ENCODE measurements at regions of chr2 and their contacts with region 1.

Region 1: DNA sequence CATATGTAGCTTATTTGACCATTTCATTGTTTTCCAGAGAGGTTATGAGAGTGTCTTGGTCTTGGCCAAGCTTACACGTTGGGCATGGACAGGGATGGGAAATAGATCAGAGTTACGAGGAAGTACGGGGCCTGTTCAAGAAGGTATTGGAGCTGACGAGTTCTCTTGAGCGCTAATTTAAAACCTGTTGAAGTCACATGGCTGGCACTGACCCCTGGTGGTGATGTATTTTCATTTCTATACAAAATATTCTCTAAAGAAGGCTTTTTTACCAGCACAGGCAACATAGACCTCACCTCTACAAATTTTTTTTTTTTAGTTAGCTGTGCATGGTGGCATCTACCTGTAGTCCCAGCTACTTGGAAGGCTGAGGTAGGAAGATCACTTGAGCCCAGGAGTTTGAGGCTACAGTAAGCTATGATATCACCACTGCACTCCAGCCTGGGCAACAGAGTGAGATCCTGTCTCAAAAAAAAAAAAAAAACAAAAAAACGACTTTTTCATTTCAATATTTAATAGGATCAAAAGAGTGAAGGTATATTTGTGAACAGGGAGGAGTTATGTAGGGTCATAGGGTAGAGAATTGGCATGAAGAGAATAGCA is 19.6 kb downstream of the UGP2 start:
- DNase-seq: peak in 4 of 5 donors; percentile 31 to 66 (median 40)
- H3K4me3 ChIP-seq: no peak overlapping the region
- H3K27ac ChIP-seq: no peak overlapping the region
- H3K4me1 ChIP-seq: no peaks in the 10 kb centered on the region
- H3K27me3 ChIP-seq: no peaks in the 10 kb centered on the region
- CTCF ChIP-seq: peak; percentile 15 to 45 (median 23)
- EP300 ChIP-seq: no peak
- POLR2A ChIP-seq: no peak

Region 2: DNA sequence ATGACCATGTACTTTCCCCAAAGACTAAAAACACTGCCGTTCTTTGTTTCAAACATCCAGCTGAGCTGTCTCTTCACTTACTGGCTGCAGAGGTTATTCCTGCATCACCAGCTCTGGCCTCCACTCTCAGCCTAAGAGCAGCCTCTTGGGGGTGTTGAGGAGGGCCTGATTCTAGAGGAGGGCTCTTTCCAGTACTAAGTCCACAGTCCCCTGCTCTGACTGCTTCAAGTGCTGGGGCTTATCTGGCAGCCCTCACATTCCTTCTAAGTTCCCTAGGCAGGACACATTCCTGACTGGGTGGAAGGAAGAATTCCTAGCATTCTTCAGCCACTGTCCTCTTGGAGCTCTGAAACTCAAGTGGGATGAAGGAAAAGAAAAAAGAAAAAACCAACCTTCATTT is 1188.7 kb before region 1 on chr2:
- intact Hi-C with region 1: no loop called
- DNase-seq: no peak
- H3K4me3 ChIP-seq: no peak overlapping the region
- H3K27ac ChIP-seq: no peak overlapping the region
- H3K4me1 ChIP-seq: no peaks in the 10 kb centered on the region
- H3K27me3 ChIP-seq: no peaks in the 10 kb centered on the region
- CTCF ChIP-seq: no peak
- EP300 ChIP-seq: no peak
- POLR2A ChIP-seq: no peak

Region 3: GRCh38 chr2:63590616-63591408 is 270.5 kb before region 1 on chr2:
- intact Hi-C with region 1: loop called in 1 of 4 experiments (anchors 10 kb)
- DNase-seq: no peak
- H3K4me3 ChIP-seq: no peak overlapping the region
- H3K27ac ChIP-seq: no peak overlapping the region
- H3K4me1 ChIP-seq: no peaks in the 10 kb centered on the region
- H3K27me3 ChIP-seq: no peaks in the 10 kb centered on the region
- CTCF ChIP-seq: no peak
- EP300 ChIP-seq: no peak
- POLR2A ChIP-seq: no peak

Region 4: DNA sequence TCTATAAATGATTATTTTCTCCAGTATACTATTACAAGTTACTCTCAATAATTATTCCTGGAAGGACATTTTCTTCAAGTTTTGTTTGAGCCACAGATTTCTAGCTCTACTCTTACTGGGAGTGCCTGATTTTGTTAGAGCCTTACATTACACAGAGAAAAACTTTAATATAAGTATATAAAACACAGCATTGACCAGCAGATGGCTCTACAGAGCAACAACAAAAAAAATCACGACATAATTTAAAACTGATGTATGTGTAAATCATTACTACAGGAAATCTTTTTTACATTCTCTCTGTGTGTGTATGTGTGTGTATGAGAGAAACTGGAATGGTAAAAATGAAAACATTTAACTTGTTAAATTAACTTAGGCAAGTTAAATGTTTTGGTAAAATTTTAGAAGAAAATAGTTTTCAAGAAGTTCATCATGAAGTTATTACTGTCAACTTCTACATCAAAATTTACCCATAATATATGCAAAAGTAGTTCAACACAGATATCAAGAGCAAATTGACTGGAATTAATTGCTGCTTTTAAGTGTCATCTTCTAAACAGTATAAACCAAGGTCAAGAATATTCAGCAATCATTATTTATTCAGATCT is 169.2 kb before region 1 on chr2:
- intact Hi-C with region 1: loop called in 3 of 4 experiments (anchors 5 to 10 kb)
- DNase-seq: no peak
- H3K4me3 ChIP-seq: no peak overlapping the region
- H3K27ac ChIP-seq: no peak overlapping the region
- H3K4me1 ChIP-seq: no peaks in the 10 kb centered on the region
- H3K27me3 ChIP-seq: no peaks in the 10 kb centered on the region
- CTCF ChIP-seq: peak in 2 of 3 donors; percentile 32 to 52
- EP300 ChIP-seq: no peak
- POLR2A ChIP-seq: no peak

Region 5: GRCh38 chr2:63698825-63699548 is 162.3 kb before region 1 on chr2:
- intact Hi-C with region 1: loop called in 3 of 4 experiments (anchors 5 to 10 kb)
- DNase-seq: peak; percentile 18 to 71 (median 34)
- H3K4me3 ChIP-seq: no peak overlapping the region
- H3K27ac ChIP-seq: no peak overlapping the region
- H3K4me1 ChIP-seq: no peaks in the 10 kb centered on the region
- H3K27me3 ChIP-seq: no peaks in the 10 kb centered on the region
- CTCF ChIP-seq: peak in 1 of 3 donors; percentile 51
- EP300 ChIP-seq: no peak
- POLR2A ChIP-seq: no peak